ENCODE measurements at regions of chr5 and their contacts with region 1.

Region 1: GRCh38 chr5:54415896-54416601 is 39.5 kb upstream of the HSPB3 start:
- DNase-seq: no peak
- H3K4me3 ChIP-seq: no peak overlapping the region
- H3K27ac ChIP-seq: no peak overlapping the region
- H3K4me1 ChIP-seq: no peaks in the 10 kb centered on the region
- H3K27me3 ChIP-seq: no peaks in the 10 kb centered on the region
- CTCF ChIP-seq: no peak
- POLR2A ChIP-seq: no peak

Region 2: GRCh38 chr5:54310433-54311175 is 105.4 kb before region 1 on chr5 and contains the start of gene ARL15:
- intact Hi-C with region 1: loop called (anchors 5 kb)
- DNase-seq: peak; percentile 99
- H3K4me3 ChIP-seq: peak within 1 kb of the TSS; percentile 65 to 81
- H3K27ac ChIP-seq: peak within 1 kb of the TSS; percentile 79 to 83
- H3K4me1 ChIP-seq: no peaks in the 10 kb centered on the region
- H3K27me3 ChIP-seq: no peaks in the 10 kb centered on the region
- CTCF ChIP-seq: peak in 2 of 4 experiments; percentile 20 to 35
- POLR2A ChIP-seq: peak; percentile 99
- total RNA-seq, gene ARL15: 16.1 to 38.4 TPM